ENCODE measurements at regions of chrX and their contacts with region 1.

Region 1: GRCh38 chrX:110450050-110450449 is 91.4 kb downstream of the RTL9 start:
- DNase-seq: peak; percentile 82

Region 2: GRCh38 chrX:109585488-109585887 is 864.6 kb before region 1 on chrX:
- intact Hi-C with region 1: no loop called
- DNase-seq: no peak

Region 3: DNA sequence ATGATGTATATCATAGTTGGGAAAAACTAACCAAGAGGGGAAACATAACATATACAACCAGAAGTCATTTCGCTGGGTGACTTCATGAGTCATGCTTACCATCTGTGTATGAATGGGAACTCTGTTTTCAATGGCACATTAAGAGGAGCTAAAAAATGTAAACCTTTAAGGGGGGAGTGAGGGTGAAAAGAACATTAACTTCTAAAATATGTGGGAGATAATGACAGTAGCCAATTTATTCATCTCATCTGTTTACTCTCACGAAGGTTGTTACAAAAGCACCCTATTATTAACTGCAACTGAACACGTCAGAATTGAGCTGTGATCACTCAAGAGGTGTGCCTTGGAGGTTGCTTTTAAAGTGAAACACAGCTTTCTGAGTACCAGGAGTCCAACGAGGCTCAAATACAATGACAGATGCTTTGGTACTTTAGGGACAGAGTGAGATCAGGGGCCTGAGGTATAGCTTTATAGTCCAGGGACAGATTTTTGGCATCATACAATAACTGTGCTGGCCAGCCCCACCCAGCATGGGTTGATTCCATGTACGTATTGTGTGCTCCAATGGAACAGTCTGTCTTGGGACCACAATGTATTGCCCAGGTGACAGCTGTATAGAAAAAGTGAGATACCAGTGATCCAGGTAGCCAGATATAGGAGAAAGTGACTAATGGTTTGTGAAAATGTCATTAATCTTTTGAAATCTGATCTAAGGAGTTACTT is 239.5 kb before region 1 on chrX:
- intact Hi-C with region 1: no loop called
- DNase-seq: no peak

Region 4: DNA sequence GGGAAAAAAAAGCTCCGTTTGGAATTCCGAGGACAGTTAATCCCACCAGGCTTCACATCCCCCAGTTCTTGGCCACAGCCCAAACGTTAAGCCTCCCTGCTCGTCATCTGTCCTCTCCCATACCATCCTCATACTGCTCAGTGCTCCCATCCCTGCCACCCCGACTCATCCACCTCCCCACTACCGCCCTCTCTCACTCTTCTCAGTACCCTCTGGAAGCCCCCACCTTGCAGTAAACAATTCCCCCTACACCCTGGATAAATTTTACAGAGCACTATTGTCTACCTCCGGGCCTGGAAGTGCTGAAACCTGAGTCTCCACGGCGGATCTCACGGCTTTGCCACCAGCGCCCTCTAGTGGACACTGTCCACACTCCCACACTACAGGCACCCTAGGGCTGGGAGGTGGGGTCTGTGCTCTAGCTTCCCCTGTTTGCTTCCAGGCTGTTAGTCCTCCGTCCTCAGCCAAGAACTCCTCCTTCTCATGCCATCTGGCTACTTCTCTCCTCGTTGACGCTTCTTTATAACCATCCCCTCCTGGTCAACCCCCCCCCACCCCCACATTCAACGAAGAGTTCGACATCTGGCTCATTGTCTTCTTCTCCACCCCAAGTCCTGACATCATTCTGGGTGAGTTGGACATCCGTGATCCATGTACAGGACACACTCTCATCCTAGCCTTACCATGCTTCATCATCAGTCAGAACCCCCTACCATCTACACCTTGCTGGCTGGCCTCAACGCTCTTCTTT is 36.9 kb before region 1 on chrX:
- intact Hi-C with region 1: no loop called
- DNase-seq: peak; percentile 84

Region 5: DNA sequence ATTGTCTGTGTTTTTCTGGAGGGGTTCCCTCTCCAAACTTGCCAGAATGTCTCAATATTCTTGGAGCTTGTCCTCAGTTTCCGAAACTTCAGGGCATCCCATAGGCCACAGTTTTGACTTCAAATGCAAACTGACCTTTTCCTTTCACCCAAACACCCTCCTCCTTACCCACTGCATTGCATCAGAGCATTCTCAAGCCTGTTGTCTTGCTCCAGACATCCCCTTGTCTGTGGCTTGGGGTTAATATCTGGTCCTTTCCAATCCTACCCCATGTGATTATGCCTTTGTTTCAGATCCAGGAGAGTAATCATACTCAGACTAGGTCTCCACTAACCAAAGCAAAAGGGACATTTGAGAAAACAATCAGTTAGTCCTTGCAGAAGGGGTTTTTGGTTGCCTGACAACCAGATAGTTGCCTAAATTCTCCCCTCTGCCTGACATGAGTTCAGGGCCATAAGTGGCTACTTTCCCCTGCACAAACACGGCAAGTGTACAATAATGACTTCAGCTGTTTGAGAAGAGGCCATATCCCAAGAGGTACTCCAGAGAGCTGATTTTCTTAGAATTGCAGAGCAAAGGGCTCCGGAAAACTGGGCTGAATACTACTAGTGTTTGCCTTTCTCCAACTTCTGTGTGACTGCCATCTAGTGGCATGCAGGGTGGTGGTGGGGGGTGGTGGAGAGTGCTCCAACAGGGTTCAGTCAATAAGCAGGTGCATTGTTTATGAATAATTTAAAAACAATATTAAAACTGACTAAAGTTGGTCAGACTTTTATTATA is 215.4 kb after region 1 on chrX:
- intact Hi-C with region 1: loop called (anchors 10 kb)
- DNase-seq: no peak

Measured in cardiac septum (tissue), 1 donor.